ENCODE measurements at regions of chr2 and their contacts with region 1.

Region 1: GRCh38 chr2:103132536-103133217 is 370.8 kb downstream of the TMEM182 start:
- DNase-seq: no peak
- ATAC-seq: no peak
- H3K4me3 ChIP-seq: no peak overlapping the region
- H3K27ac ChIP-seq: no peak overlapping the region
- H3K4me1 ChIP-seq: no peaks in the 10 kb centered on the region
- H3K27me3 ChIP-seq: no peaks in the 10 kb centered on the region
- CTCF ChIP-seq: no peak

Region 2: DNA sequence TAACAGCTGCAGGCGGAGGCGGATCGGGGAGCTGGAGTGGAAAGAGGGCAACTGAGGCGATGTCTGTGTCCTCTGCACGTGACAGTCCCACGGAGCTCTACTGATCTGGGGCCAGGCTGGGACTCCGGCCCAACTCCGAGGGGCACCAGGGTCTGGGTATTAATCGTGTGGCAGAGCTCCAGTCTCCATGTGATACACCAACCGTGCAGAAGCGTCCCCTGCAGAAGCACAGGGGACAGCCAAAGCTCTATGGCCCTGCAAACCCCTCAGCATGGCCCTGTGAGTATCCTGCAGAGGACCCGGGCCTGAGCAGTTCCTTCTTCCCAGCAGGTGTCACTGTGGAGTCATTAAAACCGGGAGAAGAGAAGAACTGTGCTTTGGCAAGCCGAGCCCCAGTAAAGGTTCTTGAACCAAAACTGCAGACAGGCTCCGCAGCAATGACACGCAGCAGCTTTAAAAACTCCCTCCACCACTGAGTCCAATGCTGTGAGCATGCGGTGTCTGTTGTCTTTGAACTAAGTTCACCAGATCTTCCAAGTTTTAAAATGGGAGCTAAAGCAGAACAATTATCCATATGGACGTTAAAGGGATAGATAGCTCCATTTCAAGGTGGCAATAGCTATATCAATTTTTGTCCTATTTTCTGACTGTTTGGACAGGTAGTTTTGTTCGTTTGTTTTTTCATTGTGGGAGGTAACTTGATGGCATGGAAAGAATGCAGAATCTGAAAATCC is 291.4 kb before region 1 on chr2:
- CTCF ChIA-PET with region 1: no interaction called
- POLR2A ChIA-PET with region 1: no interaction called
- in situ Hi-C with region 1: no loop called
- intact Hi-C with region 1: loop called (anchors 10 kb)
- DNase-seq: peak; percentile 2
- ATAC-seq: peak; percentile 87
- H3K4me3 ChIP-seq: no peak overlapping the region
- H3K27ac ChIP-seq: no peak overlapping the region
- H3K4me1 ChIP-seq: no peaks in the 10 kb centered on the region
- H3K27me3 ChIP-seq: no peaks in the 10 kb centered on the region
- CTCF ChIP-seq: peak; percentile 78

Region 3: DNA sequence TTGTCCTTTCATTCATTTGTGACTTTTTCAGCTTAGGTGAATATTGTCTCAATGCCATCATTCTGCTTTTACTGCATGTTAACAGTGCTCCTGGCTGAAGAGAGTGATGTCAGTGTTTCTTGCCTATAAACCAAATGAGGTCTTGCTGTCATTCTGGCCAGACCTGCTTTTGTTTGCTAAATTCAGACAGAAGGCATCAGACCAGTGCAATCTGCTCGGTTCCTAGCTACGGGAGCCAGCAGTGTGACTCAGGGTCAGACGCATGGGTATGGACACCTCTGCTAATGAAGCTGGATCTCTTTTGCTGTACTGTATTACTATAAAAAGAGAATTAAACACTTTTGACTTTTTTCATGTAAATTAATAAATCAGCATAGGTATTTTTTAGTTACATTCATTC is 192.0 kb before region 1 on chr2:
- CTCF ChIA-PET with region 1: no interaction called
- POLR2A ChIA-PET with region 1: no interaction called
- in situ Hi-C with region 1: no loop called
- intact Hi-C with region 1: no loop called
- DNase-seq: no peak
- ATAC-seq: no peak
- H3K4me3 ChIP-seq: no peak overlapping the region
- H3K27ac ChIP-seq: no peak overlapping the region
- H3K4me1 ChIP-seq: no peaks in the 10 kb centered on the region
- H3K27me3 ChIP-seq: no peaks in the 10 kb centered on the region
- CTCF ChIP-seq: no peak

Region 4: GRCh38 chr2:103002954-103003353 is 129.7 kb before region 1 on chr2:
- CTCF ChIA-PET with region 1: no interaction called
- POLR2A ChIA-PET with region 1: no interaction called
- in situ Hi-C with region 1: no loop called
- intact Hi-C with region 1: no loop called
- DNase-seq: no peak
- ATAC-seq: no peak
- H3K4me3 ChIP-seq: no peak overlapping the region
- H3K27ac ChIP-seq: no peak overlapping the region
- H3K4me1 ChIP-seq: no peaks in the 10 kb centered on the region
- H3K27me3 ChIP-seq: no peaks in the 10 kb centered on the region
- CTCF ChIP-seq: no peak